ENCODE measurements at regions of chr9 and their contacts with region 1.

Region 1: DNA sequence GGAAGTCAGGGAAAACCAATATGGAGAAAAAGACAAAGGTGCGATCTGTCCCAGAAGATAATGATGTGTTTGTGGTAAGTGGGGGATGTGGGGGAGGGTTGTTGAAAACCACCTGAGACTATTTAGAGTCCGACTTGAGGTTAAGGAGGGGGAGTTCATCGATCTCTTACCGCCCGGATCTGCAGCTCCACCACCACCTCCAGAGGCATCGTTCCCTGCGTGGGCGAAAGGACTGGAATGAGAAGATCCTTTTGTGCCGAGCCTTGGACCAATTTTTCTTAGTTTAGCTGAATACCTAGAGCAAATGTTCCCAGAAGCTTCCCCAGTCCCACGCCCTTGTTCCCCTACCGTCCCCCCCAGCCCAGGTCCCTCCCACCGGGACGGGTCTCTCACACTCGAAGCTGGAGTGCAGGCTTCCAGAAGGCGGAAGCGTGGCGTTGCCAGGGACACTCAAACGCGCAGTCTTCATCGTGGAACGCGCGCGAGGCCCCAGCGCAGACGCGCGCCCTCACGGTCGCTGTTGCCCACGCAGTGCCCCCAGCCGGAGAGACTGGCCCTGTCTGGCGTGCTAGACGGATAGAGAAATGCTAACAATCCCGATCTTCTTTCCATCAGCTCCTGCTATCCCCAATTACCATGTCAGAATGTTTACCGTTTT is at the start of gene SPATA6L:
- DNase-seq: peak in 1 of 2 experiments; percentile 52
- H3K4me3 ChIP-seq: peak within 1 kb of the TSS; percentile 60 to 84 (median 62)
- H3K27ac ChIP-seq: no peak within 1 kb of the TSS
- H3K4me1 ChIP-seq: peaks cover 4 to 23% (median 11%) of the 10 kb centered on the region in 4 experiments
- H3K27me3 ChIP-seq: no peaks in the 10 kb centered on the region
- CTCF ChIP-seq: no peak
- EP300 ChIP-seq: no peak
- POLR2A ChIP-seq: peak in 1 of 2 experiments; percentile 46; a peak in 2 of 3 replicates
- RAD21 ChIP-seq: no peak
- total RNA-seq, gene SPATA6L: 0.55 and 1.1 TPM in 2 replicates

Region 2: DNA sequence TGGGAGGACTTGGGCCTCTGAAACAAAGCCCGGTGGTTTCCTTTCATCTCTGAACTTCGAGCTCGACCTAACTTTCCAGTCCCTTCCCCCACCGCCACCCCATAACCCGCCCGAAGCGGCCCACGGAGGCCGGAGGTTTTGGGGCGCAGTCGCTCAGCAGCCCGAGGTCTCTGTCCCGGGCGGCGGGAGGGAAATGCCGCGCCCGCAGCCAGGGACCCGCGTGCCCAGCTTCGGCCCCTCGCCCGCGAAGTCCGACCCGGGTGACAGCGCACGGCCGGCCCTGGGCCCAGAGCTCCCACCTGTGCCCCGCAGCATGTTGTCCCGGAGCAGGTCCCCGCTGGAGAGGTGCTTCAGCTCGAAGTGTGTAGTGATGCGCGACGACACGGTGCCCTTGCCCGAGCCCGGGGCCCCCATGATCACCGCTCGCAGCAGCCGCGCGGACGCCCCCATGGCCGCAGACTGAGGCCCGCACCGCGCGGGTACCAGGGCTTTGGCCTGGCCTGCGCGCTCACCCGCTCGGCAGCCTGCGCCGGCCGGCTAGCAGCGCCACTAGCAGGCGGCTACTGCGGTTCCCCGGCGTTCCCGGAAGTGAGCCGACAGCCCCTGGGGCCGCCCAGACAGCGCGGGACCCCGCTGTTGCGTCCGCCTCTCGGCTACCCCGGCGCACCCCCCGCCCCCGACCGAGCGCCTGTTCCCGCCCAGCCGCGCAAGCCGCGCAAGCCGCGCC is 74.6 kb after region 1 on chr9 and contains the start of gene AK3:
- CTCF ChIA-PET with region 1: interaction called, 3 read pairs
- POLR2A ChIA-PET with region 1: interaction called, 14 read pairs
- DNase-seq: peak; percentile 62 to 87
- H3K4me3 ChIP-seq: peak within 1 kb of the TSS; percentile 58 to 87 (median 76)
- H3K27ac ChIP-seq: no peak within 1 kb of the TSS
- H3K4me1 ChIP-seq: peaks cover 0 to 3% (median 0%) of the 10 kb centered on the region in 4 experiments; a peak in 4 of 7 replicates
- H3K27me3 ChIP-seq: no peaks in the 10 kb centered on the region
- CTCF ChIP-seq: peak in 2 of 3 experiments; percentile 24 to 25; a peak in 3 of 4 replicates
- EP300 ChIP-seq: no peak
- POLR2A ChIP-seq: peak; percentile 48 to 86
- RAD21 ChIP-seq: peak; percentile 24 to 46
- total RNA-seq, gene AK3: 23.9 and 30.0 TPM in 2 replicates

Measured in H1 (cell line).